IMR-90 (cell line): ENCODE measurements at regions of chr2 and their contacts with region 1.

Region 1: DNA sequence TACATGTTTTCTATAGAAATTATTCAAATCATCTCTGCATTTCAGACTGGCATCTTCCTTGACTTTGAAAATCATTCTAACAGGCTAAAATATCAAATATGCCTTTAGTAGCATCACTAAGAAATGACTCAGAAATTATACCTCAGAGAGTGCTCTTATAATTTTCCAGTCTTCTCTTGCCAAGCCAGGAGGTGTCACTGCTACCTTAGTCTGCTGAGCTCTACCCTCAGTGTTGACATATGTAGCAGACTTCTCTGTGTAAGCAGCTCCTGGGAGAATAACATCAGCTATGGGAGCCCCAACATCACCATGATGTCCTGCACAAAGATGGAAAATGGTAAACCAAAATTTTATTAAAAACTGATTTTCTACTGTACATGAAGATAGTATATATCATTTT is 31.6 kb downstream of the NDUFS1 start:
- DNase-seq: peak; percentile 24
- ATAC-seq: peak; percentile 17; the same call in 1 of the 2 replicates
- H3K4me3 ChIP-seq: no peak overlapping the region
- H3K27ac ChIP-seq: no peak overlapping the region
- H3K4me1 ChIP-seq: no peaks in the 10 kb centered on the region; the same call in 1 of the 2 replicates
- H3K27me3 ChIP-seq: no peaks in the 10 kb centered on the region
- CTCF ChIP-seq: no peak
- POLR2A ChIP-seq: no peak
- RAD21 ChIP-seq: no peak

Region 2: DNA sequence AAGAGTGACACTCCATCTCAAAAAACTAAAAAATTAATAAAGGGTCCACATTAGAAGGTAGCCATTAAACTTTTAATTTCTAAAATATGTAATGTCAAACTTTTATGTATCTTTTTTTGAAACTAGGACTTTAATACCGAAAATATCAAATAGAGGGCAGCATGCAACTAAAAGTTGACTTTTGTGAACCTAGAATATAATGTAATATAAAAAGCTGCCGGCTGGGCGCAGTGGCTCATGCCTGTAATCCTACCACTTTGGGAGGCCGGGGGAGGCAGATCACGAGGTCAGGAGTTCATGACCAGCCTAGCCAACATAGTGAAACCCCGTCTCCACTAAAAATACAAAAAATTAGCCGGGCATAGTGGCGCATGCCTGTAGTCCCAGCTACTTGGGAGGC is 104.5 kb before region 1 on chr2:
- CTCF ChIA-PET with region 1: no interaction called
- POLR2A ChIA-PET with region 1: no interaction called
- dilution Hi-C with region 1: no loop called
- in situ Hi-C with region 1: no loop called
- intact Hi-C with region 1: loop called (anchors 5 kb)
- DNase-seq: no peak
- ATAC-seq: no peak
- H3K4me3 ChIP-seq: no peak overlapping the region
- H3K27ac ChIP-seq: no peak overlapping the region
- H3K4me1 ChIP-seq: no peaks in the 10 kb centered on the region
- H3K27me3 ChIP-seq: no peaks in the 10 kb centered on the region
- CTCF ChIP-seq: peak; percentile 19; the same call in 1 of the 2 replicates
- POLR2A ChIP-seq: no peak
- RAD21 ChIP-seq: no peak

Region 3: DNA sequence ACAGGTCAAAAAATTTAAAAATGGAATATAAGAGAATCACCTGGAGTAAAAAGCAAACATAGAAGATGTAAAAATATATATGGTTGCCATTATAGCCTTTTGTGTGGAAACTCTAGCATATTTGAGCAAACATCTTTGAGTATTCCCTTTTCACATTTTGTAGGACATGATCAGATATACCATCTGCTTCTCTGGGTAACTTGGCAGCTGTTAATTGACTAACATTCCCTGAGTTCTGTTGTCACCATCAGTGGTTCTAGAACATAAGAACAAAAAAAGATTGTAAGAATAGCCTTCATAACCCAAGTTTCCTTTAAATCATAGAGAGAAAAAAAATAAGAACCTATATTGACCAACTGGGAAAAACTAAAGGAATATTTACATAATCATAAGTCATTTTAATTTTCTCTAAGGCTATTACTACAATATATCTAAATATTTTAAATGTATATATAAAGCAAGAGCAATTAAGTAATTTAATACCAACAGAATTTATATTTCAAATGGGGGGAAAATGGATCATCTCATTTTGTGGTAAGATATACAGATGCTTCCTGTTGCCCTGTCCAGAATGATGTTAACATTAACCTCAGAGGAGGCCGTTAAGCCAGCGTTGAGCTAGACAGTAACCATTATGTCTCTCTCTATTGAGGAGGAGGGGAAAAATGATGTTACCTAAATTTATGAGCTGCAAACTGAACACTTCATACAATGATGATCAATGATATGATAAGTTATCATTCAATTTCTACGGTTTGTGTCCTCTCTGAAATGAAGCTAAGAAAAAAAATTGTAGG is 31.9 kb before region 1 on chr2:
- CTCF ChIA-PET with region 1: no interaction called
- POLR2A ChIA-PET with region 1: no interaction called
- dilution Hi-C with region 1: no loop called
- in situ Hi-C with region 1: no loop called
- intact Hi-C with region 1: loop called (anchors 1 kb)
- DNase-seq: peak; percentile 32
- ATAC-seq: peak; percentile 84; the same call in 1 of the 2 replicates
- H3K4me3 ChIP-seq: no peak overlapping the region
- H3K27ac ChIP-seq: no peak overlapping the region
- H3K4me1 ChIP-seq: no peaks in the 10 kb centered on the region
- H3K27me3 ChIP-seq: no peaks in the 10 kb centered on the region
- CTCF ChIP-seq: no peak
- POLR2A ChIP-seq: no peak
- RAD21 ChIP-seq: no peak